CD14-positive monocyte (primary cell): ENCODE measurements at regions of chr2 and their contacts with region 1.

Region 1: DNA sequence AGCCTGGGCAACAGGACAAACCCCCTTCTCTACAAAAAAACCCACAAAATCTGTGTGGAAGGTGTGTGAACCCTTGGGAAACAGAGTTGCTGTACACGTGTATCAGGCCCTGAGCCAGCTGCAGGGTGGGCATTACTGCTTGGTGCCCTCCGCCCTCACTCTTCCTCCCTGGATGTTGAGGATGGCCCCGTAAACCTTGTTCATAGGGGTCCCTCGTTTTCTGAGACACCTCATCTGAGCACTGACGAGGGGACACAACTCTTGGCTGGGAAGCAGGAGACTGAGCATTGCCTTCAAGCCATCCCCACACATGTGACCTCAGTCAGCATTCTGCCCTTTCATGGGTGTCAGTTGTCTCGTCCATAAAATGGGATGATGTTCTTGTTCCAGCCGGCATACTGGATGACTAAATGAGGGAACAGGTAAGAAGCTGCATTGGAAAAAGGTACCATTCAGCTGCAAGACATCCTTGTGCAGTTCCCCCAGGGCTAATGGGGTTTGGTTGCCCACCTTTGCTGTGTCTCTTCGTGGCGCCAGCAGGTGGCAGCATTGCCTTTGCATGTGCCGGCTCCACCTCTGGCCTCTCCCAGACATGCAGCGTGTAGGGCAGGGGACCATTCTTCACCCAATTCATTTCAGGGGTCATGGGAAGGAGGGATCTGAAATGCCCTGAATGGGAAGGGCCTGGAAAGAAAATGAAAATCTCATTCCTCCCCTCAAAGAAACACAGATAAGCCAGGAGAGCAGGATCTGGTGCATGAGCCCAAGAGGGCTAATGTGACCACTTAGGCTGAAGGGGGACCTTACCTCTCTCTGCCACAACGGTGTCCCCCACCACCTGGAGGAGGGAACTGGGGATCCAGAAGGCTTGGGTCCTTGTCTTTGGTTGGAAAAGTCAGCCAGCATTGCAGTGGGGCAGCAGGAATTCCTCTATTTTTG is 36.4 kb upstream of the HAAO start:
- DNase-seq: peak; percentile 59 to 70 (median 62)
- H3K4me3 ChIP-seq: no peak overlapping the region
- H3K4me3 Mint-ChIP-seq: no peak overlapping the region
- H3K27ac ChIP-seq: no peak overlapping the region
- H3K27ac Mint-ChIP-seq: peak overlapping the region in 2 of 7 donors; percentile 30 to 45
- H3K4me1 ChIP-seq: peaks cover 7 to 9% of the 10 kb centered on the region in 2 donors
- H3K4me1 Mint-ChIP-seq: peaks cover 16% of the 10 kb centered on the region
- H3K27me3 ChIP-seq: no peaks in the 10 kb centered on the region
- H3K27me3 Mint-ChIP-seq: peaks cover 0 to 6% (median 2%) of the 10 kb centered on the region in 3 donors
- CTCF ChIP-seq: peak; percentile 96

Region 2: DNA sequence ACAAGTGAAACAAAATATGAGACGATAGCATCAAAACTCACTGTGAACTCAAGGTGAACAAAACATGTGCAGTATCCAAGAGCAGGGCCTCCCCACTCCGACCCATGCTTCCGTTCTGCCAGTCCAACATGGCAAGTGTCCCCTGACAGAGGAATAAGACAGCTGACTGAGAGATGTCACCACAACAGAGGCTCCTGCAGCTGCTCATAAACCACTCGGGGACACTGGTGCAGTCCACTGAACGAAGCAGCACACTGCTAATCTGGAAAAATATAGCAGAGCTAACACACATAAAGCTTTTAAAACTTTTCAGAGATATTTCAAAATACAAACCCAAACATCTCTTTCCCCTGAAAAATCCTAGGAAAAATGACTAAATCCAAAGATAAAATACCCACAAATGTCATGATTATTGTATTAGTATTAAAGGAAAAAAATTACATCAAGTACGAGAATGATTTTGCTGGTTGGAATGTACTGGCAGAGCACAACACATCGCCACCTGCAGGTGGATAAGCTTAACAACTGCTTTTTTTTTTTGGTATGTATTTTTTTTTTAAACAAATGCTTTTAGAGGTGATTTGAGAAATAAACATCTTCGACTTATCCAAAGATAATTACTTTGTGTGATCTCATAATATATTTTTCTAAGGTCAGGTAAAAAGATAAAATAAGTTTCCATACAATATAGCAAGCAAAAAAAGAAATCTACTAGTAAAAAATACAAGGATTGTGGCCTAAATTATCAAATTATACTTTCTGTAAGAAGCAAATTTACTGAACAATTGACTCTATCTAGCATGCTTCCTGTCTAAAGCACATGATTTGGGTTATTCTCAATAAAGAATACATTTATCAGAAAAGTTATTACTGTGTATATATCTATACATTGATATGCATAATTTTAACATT is 748.5 kb after region 1 on chr2:
- intact Hi-C with region 1: loop called (anchors 2 to 10 kb)
- DNase-seq: peak; percentile 28 to 47 (median 46)
- H3K4me3 ChIP-seq: no peak overlapping the region
- H3K4me3 Mint-ChIP-seq: no peak overlapping the region
- H3K27ac ChIP-seq: no peak overlapping the region
- H3K27ac Mint-ChIP-seq: peak overlapping the region in 1 of 7 donors; percentile 30
- H3K4me1 ChIP-seq: no peaks in the 10 kb centered on the region
- H3K4me1 Mint-ChIP-seq: no peaks in the 10 kb centered on the region
- H3K27me3 ChIP-seq: no peaks in the 10 kb centered on the region
- H3K27me3 Mint-ChIP-seq: no peaks in the 10 kb centered on the region
- CTCF ChIP-seq: peak; percentile 87

Region 3: GRCh38 chr2:43611987-43612894 is 783.5 kb after region 1 on chr2:
- intact Hi-C with region 1: loop called (anchors 5 to 10 kb)
- DNase-seq: peak; percentile 51 to 61 (median 58)
- H3K4me3 ChIP-seq: no peak overlapping the region
- H3K4me3 Mint-ChIP-seq: peak overlapping the region in 1 of 2 donors; percentile 8
- H3K27ac ChIP-seq: no peak overlapping the region
- H3K27ac Mint-ChIP-seq: no peak overlapping the region
- H3K4me1 ChIP-seq: no peaks in the 10 kb centered on the region
- H3K4me1 Mint-ChIP-seq: no peaks in the 10 kb centered on the region
- H3K27me3 ChIP-seq: no peaks in the 10 kb centered on the region
- H3K27me3 Mint-ChIP-seq: peaks cover 0 to 5% (median 2%) of the 10 kb centered on the region in 3 donors
- CTCF ChIP-seq: peak; percentile 80